H1 (cell line): ENCODE measurements at regions of chr20 and their contacts with region 1.

Region 1: GRCh38 chr20:36573103-36573794 is at the start of gene TGIF2:
- DNase-seq: peak; percentile 73 to 95
- H3K4me3 ChIP-seq: peak within 1 kb of the TSS; percentile 63 to 98 (median 78)
- H3K27ac ChIP-seq: peak within 1 kb of the TSS; percentile 85
- H3K4me1 ChIP-seq: peaks cover 14 to 31% (median 18%) of the 10 kb centered on the region in 4 experiments
- H3K27me3 ChIP-seq: no peaks in the 10 kb centered on the region
- CTCF ChIP-seq: no peak
- EP300 ChIP-seq: no peak; a peak in 1 of 3 replicates
- POLR2A ChIP-seq: peak in 1 of 2 experiments; percentile 38; a peak in 1 of 3 replicates
- RAD21 ChIP-seq: no peak
- total RNA-seq, gene TGIF2: 76.7 and 77.7 TPM in 2 replicates

Region 2: GRCh38 chr20:36519944-36520343 is 53.3 kb before region 1 on chr20:
- CTCF ChIA-PET with region 1: no interaction called
- POLR2A ChIA-PET with region 1: no interaction called
- DNase-seq: no peak
- H3K4me3 ChIP-seq: no peak overlapping the region
- H3K27ac ChIP-seq: no peak overlapping the region
- H3K4me1 ChIP-seq: no peaks in the 10 kb centered on the region
- H3K27me3 ChIP-seq: no peaks in the 10 kb centered on the region
- CTCF ChIP-seq: no peak
- EP300 ChIP-seq: no peak
- POLR2A ChIP-seq: no peak
- RAD21 ChIP-seq: no peak

Region 3: GRCh38 chr20:36541227-36541763 is 32.0 kb before region 1 on chr20 and contains the start of gene MYL9:
- CTCF ChIA-PET with region 1: interaction called, 19 read pairs
- POLR2A ChIA-PET with region 1: interaction called, 10 read pairs
- DNase-seq: peak in 1 of 2 experiments; percentile 76
- H3K4me3 ChIP-seq: peak within 1 kb of the TSS; percentile 50 to 88 (median 58)
- H3K27ac ChIP-seq: no peak within 1 kb of the TSS
- H3K4me1 ChIP-seq: peaks cover 0 to 24% (median 19%) of the 10 kb centered on the region in 4 experiments; a peak in 6 of 7 replicates
- H3K27me3 ChIP-seq: no peaks in the 10 kb centered on the region
- CTCF ChIP-seq: no peak
- EP300 ChIP-seq: no peak
- POLR2A ChIP-seq: no peak
- RAD21 ChIP-seq: no peak
- total RNA-seq, gene MYL9: 193 TPM in 2 replicates

Region 4: GRCh38 chr20:36547841-36548300 is 25.4 kb before region 1 on chr20:
- CTCF ChIA-PET with region 1: interaction called, 19 read pairs
- POLR2A ChIA-PET with region 1: interaction called, 10 read pairs
- DNase-seq: peak in 1 of 2 experiments; percentile 85
- H3K4me3 ChIP-seq: no peak overlapping the region
- H3K27ac ChIP-seq: no peak overlapping the region
- H3K4me1 ChIP-seq: peaks cover 0 to 5% (median 2%) of the 10 kb centered on the region in 4 experiments; a peak in 5 of 7 replicates
- H3K27me3 ChIP-seq: no peaks in the 10 kb centered on the region
- CTCF ChIP-seq: peak; percentile 81 to 87 (median 84)
- EP300 ChIP-seq: no peak
- POLR2A ChIP-seq: no peak
- RAD21 ChIP-seq: peak; percentile 69 to 75

Region 5: DNA sequence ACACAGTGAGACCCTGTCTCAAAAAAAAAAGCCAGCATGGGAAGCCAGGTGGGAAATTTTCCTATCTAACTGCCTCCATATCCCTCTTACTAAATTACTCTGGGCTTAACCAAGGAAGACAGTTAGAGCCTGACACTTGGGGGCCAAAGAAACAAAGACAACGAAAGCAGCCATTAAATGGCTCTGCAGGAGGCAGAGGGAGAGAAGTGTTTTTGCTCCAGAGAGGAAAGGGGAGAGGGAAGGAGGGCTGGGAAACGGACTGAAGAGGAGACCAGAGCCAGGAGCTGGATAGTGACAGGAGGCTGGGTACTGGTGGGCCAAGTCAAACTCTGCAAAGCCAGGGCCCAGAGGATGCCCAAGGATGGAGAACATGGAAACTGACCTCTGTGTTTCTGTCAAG is 10.5 kb before region 1 on chr20:
- CTCF ChIA-PET with region 1: interaction called, 42 read pairs
- POLR2A ChIA-PET with region 1: interaction called, 35 read pairs
- DNase-seq: no peak
- H3K4me3 ChIP-seq: no peak overlapping the region; a peak in 2 of 8 replicates
- H3K27ac ChIP-seq: no peak overlapping the region
- H3K4me1 ChIP-seq: peaks cover 6 to 9% (median 8%) of the 10 kb centered on the region in 4 experiments
- H3K27me3 ChIP-seq: no peaks in the 10 kb centered on the region
- CTCF ChIP-seq: no peak
- EP300 ChIP-seq: no peak
- POLR2A ChIP-seq: no peak
- RAD21 ChIP-seq: no peak

Region 6: DNA sequence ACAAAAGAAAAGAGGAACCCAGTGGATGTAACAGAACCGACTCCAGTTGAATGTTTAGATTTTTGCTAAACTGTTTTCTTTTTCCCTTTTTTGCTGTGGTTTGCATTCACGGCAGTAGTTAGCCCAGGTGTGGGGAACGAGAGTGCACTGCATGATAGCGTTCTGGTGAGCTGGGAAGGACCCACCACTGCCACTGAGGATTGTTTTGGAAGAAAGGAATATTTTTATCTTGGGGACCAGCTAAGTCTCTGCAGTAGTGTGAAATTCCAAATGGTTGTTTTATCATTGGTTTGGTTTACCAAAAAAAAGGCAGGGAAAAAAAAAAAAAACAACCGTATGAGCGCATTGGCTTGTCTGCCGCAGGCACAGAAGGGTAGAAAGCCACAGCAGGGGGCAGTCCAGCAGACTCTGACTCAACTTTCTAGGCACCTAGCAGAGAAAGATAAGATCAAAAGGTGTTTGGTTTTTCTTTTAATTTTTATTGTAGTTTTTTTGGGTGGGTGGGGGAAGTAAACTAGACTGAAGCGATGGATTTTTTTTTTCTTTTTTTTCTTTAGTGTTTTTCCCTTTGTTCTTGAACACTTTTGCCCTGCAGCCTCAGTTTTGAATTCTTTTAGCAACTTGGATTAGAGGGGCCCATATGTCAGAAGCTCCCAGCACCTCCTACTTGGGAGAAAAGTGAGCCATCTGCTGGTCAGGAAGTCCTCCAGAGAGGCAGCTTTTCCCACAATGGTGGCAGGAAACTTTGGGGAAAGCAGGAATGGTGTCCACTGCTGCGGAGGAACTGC is 18.8 kb after region 1 on chr20:
- CTCF ChIA-PET with region 1: interaction called, 202 read pairs
- POLR2A ChIA-PET with region 1: interaction called, 388 read pairs
- DNase-seq: no peak
- H3K4me3 ChIP-seq: no peak overlapping the region
- H3K27ac ChIP-seq: no peak overlapping the region
- H3K4me1 ChIP-seq: peaks cover 0 to 8% (median 2%) of the 10 kb centered on the region in 4 experiments; a peak in 5 of 7 replicates
- H3K27me3 ChIP-seq: no peaks in the 10 kb centered on the region
- CTCF ChIP-seq: peak; percentile 49 to 65 (median 58)
- EP300 ChIP-seq: no peak
- POLR2A ChIP-seq: no peak
- RAD21 ChIP-seq: peak; percentile 51 to 65